Posterior cingulate gyrus (tissue), 11 donors: ENCODE measurements at regions of chr19 and their contacts with region 1.

Region 1: GRCh38 chr19:1173845-1174809 is at the start of gene SBNO2:
- DNase-seq: peak; percentile 68 to 98 (median 81)

Region 2: DNA sequence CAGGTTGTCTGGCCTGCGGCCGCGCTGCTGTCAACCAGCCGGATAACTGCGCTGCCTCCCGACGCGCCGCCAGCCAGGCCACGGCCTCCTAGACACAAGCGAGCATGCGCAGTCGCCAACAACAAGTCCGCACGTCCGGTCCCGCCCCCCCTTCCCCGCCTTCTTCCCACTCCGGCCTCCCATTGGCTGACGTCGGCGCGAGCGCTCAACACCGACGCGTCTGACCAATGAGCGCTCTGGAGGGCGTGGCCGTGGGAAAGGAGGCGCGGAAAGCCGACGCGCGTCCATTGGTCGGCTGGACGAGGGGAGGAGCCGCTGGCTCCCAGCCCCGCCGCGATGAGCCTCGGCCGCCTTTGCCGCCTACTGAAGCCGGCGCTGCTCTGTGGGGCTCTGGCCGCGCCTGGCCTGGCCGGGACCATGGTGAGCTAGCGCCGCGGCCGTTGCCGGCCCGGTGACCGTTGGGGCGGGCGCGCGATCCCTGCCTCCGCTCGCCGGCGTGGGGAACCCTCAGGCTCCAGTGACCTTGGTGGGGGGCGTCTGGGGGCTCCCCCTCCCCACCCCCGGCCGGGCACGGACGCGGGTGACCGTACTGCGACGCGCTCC is 70.3 kb before region 1 on chr19 and contains the start of gene GPX4:
- intact Hi-C with region 1: loop called (anchors 5 kb)
- DNase-seq: peak; percentile 96 to 100 (median 99)

Region 3: DNA sequence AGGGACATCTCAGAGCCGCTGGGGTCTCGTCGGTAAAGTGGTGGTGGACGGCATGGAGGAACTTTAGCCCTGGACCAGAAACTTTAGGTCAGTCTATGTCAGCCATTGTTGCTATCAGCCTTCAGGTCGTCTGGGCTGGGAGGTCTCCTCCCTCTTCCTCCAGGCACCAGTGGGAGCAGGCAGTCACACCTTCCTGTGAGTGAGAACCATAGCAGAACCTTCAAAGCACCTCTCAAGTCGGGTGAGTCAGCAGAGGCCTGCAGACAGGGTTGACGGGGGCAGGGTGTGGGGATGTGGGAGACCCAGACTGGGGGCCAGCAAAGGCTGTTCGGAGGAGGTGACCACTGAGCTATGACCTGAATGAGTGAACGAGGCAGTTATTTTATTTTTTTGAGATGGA is 15.3 kb after region 1 on chr19:
- intact Hi-C with region 1: no loop called
- DNase-seq: no peak